ENCODE measurements at regions of chr9 and their contacts with region 1.

Region 1: DNA sequence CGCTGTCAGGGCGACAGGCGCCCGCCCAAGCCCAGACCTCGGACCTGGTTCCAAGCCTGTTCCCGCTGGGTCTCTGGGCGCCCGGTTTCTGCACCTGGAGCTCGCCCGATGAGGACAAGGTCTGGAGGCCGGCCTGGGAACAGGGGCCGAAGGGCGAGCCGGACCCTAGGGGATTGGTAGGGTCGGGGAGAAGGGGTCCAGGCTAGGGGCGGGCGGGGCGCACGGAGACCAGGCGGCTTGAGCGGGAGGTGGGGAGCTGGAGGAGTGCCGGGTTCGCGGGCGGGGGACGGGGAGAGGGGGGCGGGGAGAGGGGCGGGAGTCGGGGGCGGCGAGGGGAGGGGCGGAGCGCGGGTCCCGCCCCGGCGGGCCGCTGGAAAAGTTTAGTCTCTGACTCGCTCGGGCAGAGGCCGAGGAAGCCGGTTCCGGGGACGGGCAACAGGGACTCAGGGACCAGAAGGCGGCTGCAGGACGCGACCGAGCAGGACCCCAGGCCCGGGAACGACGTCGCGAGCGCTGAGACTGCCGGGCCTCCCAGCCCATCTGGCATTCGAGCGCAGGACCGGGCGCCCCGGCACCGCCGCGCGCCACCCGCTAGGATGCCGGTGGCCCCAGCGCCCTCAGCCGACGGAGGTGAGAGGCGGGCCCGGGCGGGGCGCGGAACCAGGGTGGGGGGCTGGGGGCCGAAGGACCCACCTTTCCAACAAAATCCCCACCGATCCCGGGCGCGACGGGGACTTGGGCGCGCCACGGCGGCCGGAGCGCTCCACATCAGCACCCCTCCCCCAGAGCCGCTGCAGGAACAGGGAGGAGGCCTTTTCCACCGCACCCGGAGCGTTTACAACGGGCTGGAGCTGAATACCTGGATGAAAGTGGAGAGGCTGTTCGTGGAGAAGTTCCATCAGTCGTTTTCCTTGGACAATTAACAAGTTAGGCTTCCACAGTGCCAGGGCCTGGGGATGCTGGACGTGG is at the start of gene S1PR3:
- DNase-seq: peak; percentile 71 to 79
- ATAC-seq: peak; percentile 79 to 91 (median 85)
- H3K4me3 ChIP-seq: peak within 1 kb of the TSS; percentile 64 to 92 (median 76)
- H3K27ac ChIP-seq: peak within 1 kb of the TSS in 9 of 10 donors; percentile 54 to 90 (median 83)
- H3K4me1 ChIP-seq: peaks cover under 1 to 63% (median 30%) of the 10 kb centered on the region in 9 donors
- H3K27me3 ChIP-seq: peaks cover 0 to 37% (median 4%) of the 10 kb centered on the region in 7 donors
- CTCF ChIP-seq: peak in 5 of 9 donors; percentile 12 to 40 (median 36)
- total RNA-seq, gene S1PR3: 3.6 to 61.6 (median 13.1) TPM

Region 2: GRCh38 chr9:88651682-88652633 is 339.4 kb before region 1 on chr9:
- intact Hi-C with region 1: loop called in 1 of 10 experiments (anchors 10 kb)
- DNase-seq: peak; percentile 78 to 85
- ATAC-seq: peak; percentile 85 to 96 (median 92)
- H3K4me3 ChIP-seq: no peak overlapping the region
- H3K27ac ChIP-seq: peak overlapping the region in 5 of 10 donors; percentile 49 to 80 (median 55)
- H3K4me1 ChIP-seq: peaks cover 0 to 25% (median 4%) of the 10 kb centered on the region in 9 donors
- H3K27me3 ChIP-seq: no peaks in the 10 kb centered on the region
- CTCF ChIP-seq: peak in 4 of 9 donors; percentile 15 to 38 (median 32)

Region 3: GRCh38 chr9:88733651-88734421 is 257.5 kb before region 1 on chr9:
- intact Hi-C with region 1: loop called in 4 of 10 experiments (anchors 5 to 10 kb)
- DNase-seq: peak; percentile 32 to 79
- ATAC-seq: peak in 5 of 8 donors; percentile 48 to 77 (median 51)
- H3K4me3 ChIP-seq: no peak overlapping the region
- H3K27ac ChIP-seq: peak overlapping the region in 6 of 10 donors; percentile 22 to 77 (median 56)
- H3K4me1 ChIP-seq: peaks cover 0 to 21% (median 7%) of the 10 kb centered on the region in 9 donors
- H3K27me3 ChIP-seq: no peaks in the 10 kb centered on the region
- CTCF ChIP-seq: no peak

Region 4: GRCh38 chr9:88781628-88782391 is 209.5 kb before region 1 on chr9:
- intact Hi-C with region 1: loop called in 7 of 10 experiments (anchors 1 to 10 kb)
- DNase-seq: peak; percentile 33 to 48
- ATAC-seq: peak; percentile 40 to 82 (median 72)
- H3K4me3 ChIP-seq: no peak overlapping the region
- H3K27ac ChIP-seq: peak overlapping the region; percentile 15 to 71 (median 54)
- H3K4me1 ChIP-seq: peaks cover 9 to 50% (median 43%) of the 10 kb centered on the region in 9 donors
- H3K27me3 ChIP-seq: no peaks in the 10 kb centered on the region
- CTCF ChIP-seq: peak; percentile 14 to 70 (median 50)

Region 5: DNA sequence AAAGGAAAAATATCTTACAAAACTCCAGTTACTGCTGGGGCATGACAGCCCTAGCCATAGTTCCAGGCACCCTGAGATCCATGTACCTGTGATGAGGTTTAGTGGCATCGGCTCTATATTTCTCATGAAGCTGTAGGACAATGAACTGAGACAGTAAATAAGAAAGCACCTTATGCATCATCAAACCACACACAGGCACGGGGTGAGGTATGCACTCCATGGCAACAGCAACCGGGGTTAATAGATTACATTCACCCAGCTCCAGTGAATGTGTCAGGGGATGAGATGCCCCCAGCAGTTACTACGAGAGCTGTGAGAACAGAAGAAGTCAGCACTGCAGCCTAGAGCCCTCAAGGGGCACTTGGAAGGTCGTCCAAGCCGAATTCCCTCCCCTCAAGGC is 162.1 kb before region 1 on chr9:
- intact Hi-C with region 1: loop called in 1 of 10 experiments (anchors 10 kb)
- DNase-seq: no peak
- ATAC-seq: no peak
- H3K4me3 ChIP-seq: no peak overlapping the region
- H3K27ac ChIP-seq: no peak overlapping the region
- H3K4me1 ChIP-seq: peaks cover 0 to 39% (median 17%) of the 10 kb centered on the region in 9 donors
- H3K27me3 ChIP-seq: peaks cover 0 to 99% (median 1%) of the 10 kb centered on the region in 7 donors
- CTCF ChIP-seq: no peak

Region 6: DNA sequence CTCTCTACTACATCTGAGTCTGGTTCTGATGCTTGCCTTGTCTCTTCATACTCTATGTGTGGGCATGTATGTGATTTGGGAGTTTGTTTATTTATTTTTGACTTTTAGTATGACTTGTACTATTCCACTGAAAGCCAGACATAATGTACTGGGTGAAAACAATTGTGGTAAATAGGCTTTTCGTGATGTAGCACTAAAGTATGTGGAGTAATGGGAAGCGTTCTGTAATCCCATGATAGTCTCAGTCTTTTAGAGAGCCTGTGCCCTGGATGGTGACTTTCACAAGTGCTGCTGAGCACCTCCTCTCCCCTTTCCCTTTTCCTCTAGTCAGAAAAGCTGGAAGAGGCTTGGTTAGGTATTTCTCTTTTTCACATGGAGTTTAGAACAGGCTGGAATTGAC is 85.8 kb before region 1 on chr9:
- intact Hi-C with region 1: no loop called
- DNase-seq: no peak
- ATAC-seq: no peak
- H3K4me3 ChIP-seq: no peak overlapping the region
- H3K27ac ChIP-seq: no peak overlapping the region
- H3K4me1 ChIP-seq: no peaks in the 10 kb centered on the region
- H3K27me3 ChIP-seq: peaks cover 0 to 6% (median 0%) of the 10 kb centered on the region in 7 donors
- CTCF ChIP-seq: no peak

Region 7: DNA sequence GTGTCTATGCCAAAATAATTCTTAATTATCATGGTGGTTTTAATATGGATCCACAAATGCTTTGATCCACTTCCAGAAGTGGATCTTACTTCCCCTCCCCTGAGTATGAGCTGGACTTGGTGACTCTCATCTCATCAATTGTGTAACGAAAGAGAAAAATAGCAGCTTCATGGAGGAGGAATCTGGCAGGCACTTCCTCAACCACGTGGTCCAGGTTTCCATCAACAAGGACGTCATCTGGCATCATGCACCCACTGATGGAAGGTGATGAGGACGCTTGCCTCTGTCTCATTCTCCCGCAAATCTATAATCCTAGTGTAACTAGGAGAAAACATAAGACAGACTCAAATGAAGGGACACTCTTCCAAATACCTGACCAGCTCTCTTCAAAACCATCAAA is 54.7 kb before region 1 on chr9:
- intact Hi-C with region 1: loop called in 1 of 10 experiments (anchors 5 kb)
- DNase-seq: no peak
- ATAC-seq: no peak
- H3K4me3 ChIP-seq: no peak overlapping the region
- H3K27ac ChIP-seq: no peak overlapping the region
- H3K4me1 ChIP-seq: peaks cover 0 to 15% (median 0%) of the 10 kb centered on the region in 9 donors
- H3K27me3 ChIP-seq: peaks cover 0 to 4% (median 0%) of the 10 kb centered on the region in 7 donors
- CTCF ChIP-seq: no peak

Measured in heart right ventricle (tissue), 16 donors.